WTC11 (cell line): ENCODE measurements at regions of chr12 and their contacts with region 1.

Region 1: DNA sequence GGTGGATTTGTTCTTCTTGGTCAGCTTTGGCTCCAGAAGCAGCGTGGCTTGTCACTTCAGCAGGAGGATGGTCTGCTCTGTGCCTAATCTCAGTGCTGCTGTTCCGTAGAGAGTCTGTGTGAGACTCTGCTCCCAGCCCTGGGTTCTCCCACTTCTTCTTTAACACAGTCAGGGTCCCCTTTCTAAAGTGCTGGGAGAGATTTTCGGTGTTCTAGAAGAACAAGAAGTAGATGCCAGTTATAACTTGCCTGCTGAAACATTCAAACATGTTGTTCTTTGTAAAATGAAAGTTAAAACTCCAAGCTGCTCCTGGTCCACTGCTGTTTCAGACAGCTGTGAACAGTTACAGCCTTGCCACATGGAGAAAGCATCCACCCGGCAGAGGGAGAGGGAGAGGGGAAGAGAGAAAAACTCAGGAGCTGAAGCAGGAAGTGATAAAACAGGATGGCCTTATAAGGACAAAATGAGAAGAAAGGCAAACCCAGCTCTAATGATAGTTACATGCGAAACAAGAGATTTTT is 55.2 kb upstream of the CERS5 start:
- DNase-seq: peak; percentile 31
- ATAC-seq: peak; percentile 93
- H3K4me3 Mint-ChIP-seq: no peak overlapping the region
- H3K27ac Mint-ChIP-seq: no peak overlapping the region
- H3K4me1 Mint-ChIP-seq: peaks cover 20% of the 10 kb centered on the region
- H3K27me3 Mint-ChIP-seq: no peaks in the 10 kb centered on the region
- CTCF ChIP-seq: no peak

Region 2: DNA sequence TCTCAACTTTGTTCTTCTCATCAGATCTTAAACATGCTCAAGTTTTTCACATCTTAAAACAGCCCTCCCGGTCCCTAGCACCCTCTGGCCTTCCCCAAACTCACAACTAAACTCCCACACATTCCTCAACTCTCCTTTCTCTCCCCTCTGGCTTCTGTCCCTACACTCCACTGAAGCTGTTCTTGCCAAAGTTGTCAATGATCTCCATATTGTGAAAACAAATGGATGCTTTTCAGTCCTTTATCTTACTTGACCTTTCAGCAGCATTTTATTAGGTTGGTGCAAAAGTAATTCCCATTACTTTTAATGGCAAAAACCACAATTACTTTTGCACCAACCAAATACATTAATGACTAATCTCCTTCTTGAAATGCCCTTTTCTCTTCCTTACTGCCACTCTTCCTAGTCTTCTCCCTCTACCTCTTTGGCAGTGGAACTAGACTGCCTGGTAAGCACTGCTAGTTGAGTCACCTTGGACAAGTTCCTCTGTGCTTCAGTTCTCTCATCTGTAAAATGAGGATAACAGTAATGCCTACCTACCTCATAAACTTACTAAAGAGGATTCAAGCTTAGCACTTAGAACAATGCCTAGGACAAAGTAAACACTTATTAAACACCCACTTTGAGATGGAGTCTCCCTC is 71.2 kb before region 1 on chr12:
- CTCF ChIA-PET with region 1: no interaction called
- POLR2A ChIA-PET with region 1: no interaction called
- DNase-seq: no peak
- ATAC-seq: no peak
- H3K4me3 Mint-ChIP-seq: no peak overlapping the region
- H3K27ac Mint-ChIP-seq: peak overlapping the region; percentile 19
- H3K4me1 Mint-ChIP-seq: no peaks in the 10 kb centered on the region
- H3K27me3 Mint-ChIP-seq: no peaks in the 10 kb centered on the region
- CTCF ChIP-seq: no peak

Region 3: GRCh38 chr12:50240792-50241114 is 18.4 kb after region 1 on chr12:
- CTCF ChIA-PET with region 1: no interaction called
- POLR2A ChIA-PET with region 1: no interaction called
- DNase-seq: no peak
- ATAC-seq: no peak
- H3K4me3 Mint-ChIP-seq: no peak overlapping the region
- H3K27ac Mint-ChIP-seq: peak overlapping the region; percentile 6; the same call in 1 of the 2 replicates
- H3K4me1 Mint-ChIP-seq: peaks cover 8% of the 10 kb centered on the region
- H3K27me3 Mint-ChIP-seq: no peaks in the 10 kb centered on the region
- CTCF ChIP-seq: no peak

Region 4: GRCh38 chr12:50283229-50283923 is 61.0 kb after region 1 on chr12 and contains the start of gene LIMA1:
- CTCF ChIA-PET with region 1: interaction called, 22 read pairs
- POLR2A ChIA-PET with region 1: interaction called, 10 read pairs
- DNase-seq: peak; percentile 96
- ATAC-seq: peak; percentile 99
- H3K4me3 Mint-ChIP-seq: peak within 1 kb of the TSS; percentile 70
- H3K27ac Mint-ChIP-seq: peak within 1 kb of the TSS; percentile 92
- H3K4me1 Mint-ChIP-seq: peaks cover 11% of the 10 kb centered on the region
- H3K27me3 Mint-ChIP-seq: peaks cover 8% of the 10 kb centered on the region
- CTCF ChIP-seq: no peak
- total RNA-seq, gene LIMA1: 30.8 to 41.2 TPM (median 31.2 TPM) in 3 replicates